ENCODE measurements at regions of chr19 and their contacts with region 1.

Region 1: DNA sequence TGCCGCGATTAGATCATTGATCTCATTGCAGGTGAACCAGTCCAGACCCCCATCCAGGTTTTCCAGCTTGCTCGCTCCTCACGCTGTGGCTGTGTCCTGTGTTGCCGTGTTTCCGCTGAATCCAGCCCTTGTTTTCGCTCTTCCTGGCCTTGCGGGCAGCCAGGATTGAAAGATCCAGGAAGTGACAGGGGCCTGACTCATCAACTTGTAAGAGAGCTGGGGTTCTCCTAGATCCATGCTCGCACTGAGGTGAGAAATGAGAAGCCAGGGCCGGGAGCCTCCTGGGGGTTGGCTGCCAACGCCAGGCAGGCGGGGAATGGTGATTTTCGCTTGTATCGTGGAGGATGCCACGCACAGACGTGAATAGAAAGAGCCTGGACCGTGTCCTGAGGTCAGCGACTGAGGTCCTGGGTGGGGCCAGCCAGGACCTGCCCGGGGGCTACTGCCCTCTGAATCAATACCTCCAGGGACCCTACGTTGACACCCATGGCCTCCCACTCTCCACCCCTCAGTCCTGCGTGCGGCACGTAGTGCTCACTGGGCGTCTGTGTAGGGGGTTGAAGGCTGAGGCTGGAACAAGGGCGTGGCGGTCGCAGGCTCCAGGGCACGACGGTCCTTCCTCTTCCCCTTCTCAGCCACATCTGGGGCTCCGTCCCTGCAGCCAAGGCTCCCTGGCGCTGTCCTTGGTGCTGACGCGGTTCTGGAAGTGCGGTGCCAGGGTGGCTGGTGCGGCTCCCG is 7.3 kb upstream of the PTPRH start:
- DNase-seq: peak; percentile 58 to 94 (median 86)
- H3K4me3 ChIP-seq: peak overlapping the region; percentile 28 to 86 (median 68)
- H3K27ac ChIP-seq: peak overlapping the region; percentile 28 to 93 (median 83)
- H3K27me3 ChIP-seq: no peaks in the 10 kb centered on the region
- CTCF ChIP-seq: no peak

Region 2: GRCh38 chr19:55178781-55179599 is 37.6 kb before region 1 on chr19:
- intact Hi-C with region 1: loop called (anchors 1 to 5 kb)
- DNase-seq: peak; percentile 79 to 95 (median 90)
- H3K4me3 ChIP-seq: peak overlapping the region; percentile 49 to 81 (median 68)
- H3K27ac ChIP-seq: peak overlapping the region in 51 of 59 donors; percentile 0 to 90 (median 66)
- H3K27me3 ChIP-seq: peaks cover 0 to 60% (median 23%) of the 10 kb centered on the region in 45 donors
- CTCF ChIP-seq: no peak